ENCODE measurements at regions of chr19 and their contacts with region 1.

Region 1: GRCh38 chr19:14479975-14480699 is 5.0 kb upstream of the PTGER1 start:
- DNase-seq: peak; percentile 79
- H3K4me3 Mint-ChIP-seq: no peak overlapping the region
- H3K27ac Mint-ChIP-seq: no peak overlapping the region
- H3K4me1 Mint-ChIP-seq: peaks cover 19% of the 10 kb centered on the region
- H3K27me3 Mint-ChIP-seq: no peaks in the 10 kb centered on the region

Region 2: DNA sequence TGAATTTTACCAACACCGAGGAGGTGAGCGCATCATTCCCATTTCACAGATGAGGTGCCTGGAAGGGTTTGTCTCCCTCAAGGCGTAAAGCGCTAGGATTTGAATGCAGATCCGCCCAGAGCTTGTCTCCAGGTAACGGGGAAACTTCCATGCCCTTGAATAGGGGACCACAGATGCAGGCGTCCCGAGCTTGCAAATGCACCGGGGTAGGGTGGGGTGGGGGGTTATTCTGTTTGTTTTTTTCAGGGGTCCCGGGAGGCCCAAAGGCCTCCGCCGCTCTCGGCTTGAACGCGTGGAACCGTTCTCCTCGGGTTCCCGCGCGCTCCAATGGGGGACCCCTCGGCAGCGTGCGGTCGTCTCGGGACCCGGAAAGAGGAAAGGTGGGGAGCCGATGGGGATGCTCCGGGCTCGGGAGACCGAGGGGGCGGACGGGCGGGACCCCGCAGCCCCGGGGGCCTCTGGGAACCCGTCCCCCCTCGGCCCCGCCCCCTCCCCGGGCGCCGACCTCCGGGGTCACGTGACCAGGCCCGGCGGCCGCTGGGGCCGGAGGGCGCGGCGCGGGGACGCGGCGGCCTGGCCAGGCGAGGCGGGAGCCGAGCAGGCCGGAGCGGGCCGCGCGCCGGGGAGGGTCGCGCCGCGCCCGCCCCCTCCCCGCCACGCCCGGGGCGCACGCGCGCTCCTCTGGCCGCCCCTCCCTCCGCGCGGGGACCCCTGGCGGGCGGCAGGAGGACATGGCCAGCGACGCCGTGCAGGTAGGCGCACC is 47.2 kb before region 1 on chr19 and contains the start of gene PKN1:
- CTCF ChIA-PET with region 1: interaction called, 17 read pairs
- POLR2A ChIA-PET with region 1: interaction called, 3 read pairs
- DNase-seq: peak; percentile 58
- H3K4me3 Mint-ChIP-seq: peak within 1 kb of the TSS; percentile 76
- H3K27ac Mint-ChIP-seq: peak within 1 kb of the TSS; percentile 74
- H3K4me1 Mint-ChIP-seq: peaks cover 39% of the 10 kb centered on the region
- H3K27me3 Mint-ChIP-seq: peaks cover 10% of the 10 kb centered on the region
- total RNA-seq, gene PKN1: 219 to 232 TPM

Region 3: DNA sequence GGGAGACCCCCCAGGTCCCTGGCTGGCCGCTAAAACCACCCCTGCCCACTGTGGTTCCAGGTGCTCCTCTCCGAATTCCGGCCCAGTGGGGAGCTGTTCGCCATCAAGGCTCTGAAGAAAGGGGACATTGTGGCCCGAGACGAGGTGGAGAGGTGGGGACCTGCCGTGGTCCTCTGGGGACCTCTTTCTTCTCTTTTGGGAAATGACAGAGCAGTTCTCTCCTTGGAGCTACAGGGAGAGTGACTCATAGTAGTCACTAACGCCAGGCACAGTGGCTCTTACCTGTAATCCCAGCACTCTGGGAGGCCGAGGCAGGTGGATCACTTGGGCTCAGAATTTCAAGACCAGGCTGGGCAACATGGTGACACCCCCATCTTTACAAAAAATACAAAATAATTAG is 12.3 kb before region 1 on chr19:
- CTCF ChIA-PET with region 1: interaction called, 11 read pairs
- POLR2A ChIA-PET with region 1: no interaction called
- DNase-seq: no peak
- H3K4me3 Mint-ChIP-seq: no peak overlapping the region
- H3K27ac Mint-ChIP-seq: no peak overlapping the region
- H3K4me1 Mint-ChIP-seq: peaks cover under 1% of the 10 kb centered on the region
- H3K27me3 Mint-ChIP-seq: peaks cover 3% of the 10 kb centered on the region

Region 4: GRCh38 chr19:14595516-14595915 is 115.4 kb after region 1 on chr19:
- CTCF ChIA-PET with region 1: no interaction called
- POLR2A ChIA-PET with region 1: no interaction called
- DNase-seq: no peak
- H3K4me3 Mint-ChIP-seq: no peak overlapping the region
- H3K27ac Mint-ChIP-seq: no peak overlapping the region
- H3K4me1 Mint-ChIP-seq: no peaks in the 10 kb centered on the region
- H3K27me3 Mint-ChIP-seq: no peaks in the 10 kb centered on the region

Measured in activated CD4-positive, alpha-beta memory T cell treated with anti-CD3 and anti-CD28 coated beads, Interleukin-2, amount 10 ng/mL, durations not matched to agents 7 days and 5 days (primary cell).